ENCODE measurements at regions of chr1 and their contacts with region 1.

Region 1: DNA sequence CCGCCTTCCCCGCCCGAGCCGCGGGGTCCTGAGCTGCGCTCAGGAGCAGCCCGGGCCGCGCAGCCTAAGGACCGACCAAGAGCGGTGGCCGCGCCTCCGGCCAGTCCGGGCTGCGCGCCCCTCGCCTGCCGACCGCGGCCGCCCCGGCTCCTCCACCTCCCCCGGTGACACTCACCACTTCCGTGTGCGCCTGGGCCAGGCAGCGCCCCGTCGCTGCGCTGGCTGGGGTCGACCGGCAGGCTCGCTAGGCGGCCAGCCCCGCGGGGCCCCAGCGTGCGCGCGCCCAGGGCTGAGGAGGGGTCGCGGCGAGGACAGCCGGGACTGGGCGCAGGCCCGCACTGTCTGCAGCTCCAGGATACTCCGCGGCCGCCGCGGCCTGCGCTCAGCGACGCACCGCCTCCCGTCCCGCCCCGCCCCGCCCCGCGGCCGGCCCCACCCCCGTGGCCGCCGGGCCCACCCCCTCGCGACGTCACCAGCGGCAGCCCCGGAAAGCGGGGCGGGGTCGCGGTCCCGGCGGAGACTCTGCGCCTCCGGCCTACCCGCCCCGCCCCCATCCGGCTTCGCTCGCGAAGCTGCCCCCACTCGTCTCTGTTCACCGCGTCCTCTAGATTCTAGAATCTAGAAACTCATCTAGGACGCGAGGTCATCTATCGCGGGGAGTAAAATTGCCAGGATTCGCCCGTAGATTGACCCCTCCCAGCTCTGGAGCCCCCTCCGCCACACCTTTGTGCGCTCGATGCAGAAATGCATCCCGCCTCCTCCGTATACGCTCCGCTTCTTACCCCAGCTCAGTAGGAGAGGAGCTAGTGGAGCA is at the start of gene JAK1:
- DNase-seq: peak; percentile 87 to 91 (median 90)
- H3K4me3 ChIP-seq: peak within 1 kb of the TSS; percentile 93 to 95
- H3K4me3 Mint-ChIP-seq: peak within 1 kb of the TSS; percentile 89 to 97 (median 94)
- H3K27ac ChIP-seq: peak within 1 kb of the TSS; percentile 96
- H3K27ac Mint-ChIP-seq: peak within 1 kb of the TSS; percentile 93 to 97 (median 97)
- H3K4me1 ChIP-seq: peaks cover 47% of the 10 kb centered on the region
- H3K4me1 Mint-ChIP-seq: peaks cover 38 to 42% (median 40%) of the 10 kb centered on the region in 4 donors
- H3K27me3 ChIP-seq: no peaks in the 10 kb centered on the region
- H3K27me3 Mint-ChIP-seq: no peaks in the 10 kb centered on the region
- total RNA-seq, gene JAK1: 370 to 372 TPM

Region 2: DNA sequence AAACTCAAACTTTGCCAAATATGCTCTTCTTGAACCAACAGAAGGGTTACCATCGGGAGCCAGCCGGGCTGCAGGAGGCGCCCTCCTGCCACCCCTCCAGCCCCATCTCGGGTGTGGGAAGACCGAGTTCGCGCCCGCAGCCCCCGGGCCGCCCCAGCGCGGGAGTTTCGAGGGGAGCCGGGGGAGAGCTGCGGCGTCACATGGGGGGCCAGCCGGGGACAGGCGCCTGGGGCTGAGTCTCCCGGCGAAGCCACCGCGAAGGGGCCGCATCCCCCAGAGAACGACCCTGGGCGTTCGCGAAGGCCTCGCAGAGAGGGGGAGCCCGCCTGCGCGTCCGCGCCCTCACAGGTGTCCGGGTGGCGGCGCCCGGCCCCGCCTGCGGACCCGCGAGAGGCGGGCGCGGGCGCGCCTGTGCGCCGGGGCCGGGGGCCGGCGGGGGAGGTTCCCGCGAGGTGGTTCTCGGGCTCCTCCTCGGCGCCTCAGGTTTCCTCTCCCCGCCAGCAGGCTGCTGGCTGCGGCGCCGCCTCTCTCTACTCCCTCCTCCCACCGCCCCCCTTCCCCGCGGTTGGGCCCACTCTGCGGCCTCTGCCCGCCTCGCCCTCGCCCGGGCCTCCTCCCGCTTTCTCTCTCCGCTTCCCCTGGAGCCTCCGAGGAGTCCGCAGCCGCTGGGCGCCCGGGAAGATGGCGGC is 221.7 kb before region 1 on chr1 and contains the start of gene RAVER2:
- CTCF ChIA-PET with region 1: no interaction called
- POLR2A ChIA-PET with region 1: no interaction called
- intact Hi-C with region 1: loop called (anchors 10 kb)
- DNase-seq: peak; percentile 53 to 75 (median 62)
- H3K4me3 ChIP-seq: peak within 1 kb of the TSS; percentile 17 to 54
- H3K4me3 Mint-ChIP-seq: peak within 1 kb of the TSS; percentile 87 to 94 (median 92)
- H3K27ac ChIP-seq: peak within 1 kb of the TSS; percentile 43
- H3K27ac Mint-ChIP-seq: peak within 1 kb of the TSS; percentile 77 to 90 (median 82)
- H3K4me1 ChIP-seq: peaks cover 13% of the 10 kb centered on the region
- H3K4me1 Mint-ChIP-seq: peaks cover 9 to 30% (median 22%) of the 10 kb centered on the region in 4 donors
- H3K27me3 ChIP-seq: peaks cover 3% of the 10 kb centered on the region
- H3K27me3 Mint-ChIP-seq: peaks cover 2 to 3% of the 10 kb centered on the region in 2 donors
- total RNA-seq, gene RAVER2: 1.7 to 2.1 TPM

Region 3: GRCh38 chr1:64864018-64864940 is 102.1 kb before region 1 on chr1:
- CTCF ChIA-PET with region 1: interaction called, 3 read pairs
- POLR2A ChIA-PET with region 1: interaction called, 20 read pairs
- intact Hi-C with region 1: loop called (anchors 1 kb)
- DNase-seq: peak; percentile 71 to 77 (median 73)
- H3K4me3 ChIP-seq: no peak overlapping the region
- H3K4me3 Mint-ChIP-seq: peak overlapping the region in 7 of 8 donors; percentile 7 to 79 (median 64)
- H3K27ac ChIP-seq: peak overlapping the region; percentile 48
- H3K27ac Mint-ChIP-seq: peak overlapping the region; percentile 63 to 93 (median 89)
- H3K4me1 ChIP-seq: peaks cover 29% of the 10 kb centered on the region
- H3K4me1 Mint-ChIP-seq: peaks cover 30 to 58% (median 46%) of the 10 kb centered on the region in 4 donors
- H3K27me3 ChIP-seq: no peaks in the 10 kb centered on the region
- H3K27me3 Mint-ChIP-seq: no peaks in the 10 kb centered on the region

Region 4: GRCh38 chr1:64923294-64923721 is 43.1 kb before region 1 on chr1:
- CTCF ChIA-PET with region 1: interaction called, 3 read pairs
- POLR2A ChIA-PET with region 1: interaction called, 17 read pairs
- intact Hi-C with region 1: loop called (anchors 2 kb)
- DNase-seq: peak in 2 of 5 donors; percentile 53 to 67
- H3K4me3 ChIP-seq: no peak overlapping the region
- H3K4me3 Mint-ChIP-seq: peak overlapping the region in 7 of 8 donors; percentile 5 to 71 (median 60)
- H3K27ac ChIP-seq: peak overlapping the region; percentile 33
- H3K27ac Mint-ChIP-seq: peak overlapping the region; percentile 2 to 89 (median 78)
- H3K4me1 ChIP-seq: peaks cover 85% of the 10 kb centered on the region
- H3K4me1 Mint-ChIP-seq: peaks cover 76 to 98% (median 88%) of the 10 kb centered on the region in 4 donors
- H3K27me3 ChIP-seq: no peaks in the 10 kb centered on the region
- H3K27me3 Mint-ChIP-seq: no peaks in the 10 kb centered on the region

Region 5: DNA sequence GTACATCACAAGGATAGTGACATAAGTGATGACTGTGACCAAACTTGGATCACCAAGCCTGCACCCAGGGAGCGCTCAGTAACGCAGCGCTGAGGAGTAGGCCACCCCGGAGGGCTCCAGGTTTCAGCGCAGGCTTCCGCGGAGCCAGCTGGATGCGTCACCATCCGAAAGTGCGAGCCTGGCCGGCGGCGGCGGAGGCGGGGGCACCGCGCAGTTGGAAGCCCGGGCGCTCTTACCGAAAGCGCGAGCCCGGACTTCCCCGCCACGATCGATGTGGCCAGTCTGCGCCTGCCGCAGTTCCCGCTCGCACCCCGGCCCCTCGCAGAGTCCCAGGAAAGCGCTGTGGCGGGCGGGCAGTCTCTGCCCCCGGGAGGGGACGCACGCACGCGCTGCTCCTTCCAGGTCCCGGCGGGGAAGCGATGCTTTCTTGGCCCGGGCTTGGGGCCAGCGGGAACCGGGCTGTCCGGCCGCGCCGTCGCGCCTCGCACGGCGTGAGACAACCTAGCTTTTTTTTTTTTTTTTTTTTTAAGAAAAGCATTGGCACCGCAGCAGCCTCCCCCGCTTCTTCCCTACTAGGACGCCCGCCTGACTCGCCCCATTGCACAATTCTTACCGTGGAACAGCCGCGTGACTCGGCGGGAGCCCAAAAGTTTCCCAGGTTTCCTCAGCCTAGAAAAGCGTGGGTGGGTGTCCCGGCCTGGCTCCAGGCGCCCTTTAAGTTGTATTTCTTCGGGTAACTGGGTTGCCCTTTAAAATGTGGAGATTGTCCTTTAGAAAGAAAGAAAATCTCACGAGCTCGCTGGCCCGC is 36.3 kb after region 1 on chr1:
- CTCF ChIA-PET with region 1: interaction called, 3 read pairs
- POLR2A ChIA-PET with region 1: interaction called, 36 read pairs
- intact Hi-C with region 1: loop called (anchors 1 kb)
- DNase-seq: peak; percentile 67 to 87 (median 72)
- H3K4me3 ChIP-seq: peak overlapping the region; percentile 33 to 49
- H3K4me3 Mint-ChIP-seq: peak overlapping the region; percentile 77 to 90 (median 89)
- H3K27ac ChIP-seq: peak overlapping the region; percentile 52
- H3K27ac Mint-ChIP-seq: peak overlapping the region; percentile 57 to 96 (median 89)
- H3K4me1 ChIP-seq: peaks cover 25% of the 10 kb centered on the region
- H3K4me1 Mint-ChIP-seq: peaks cover 21 to 43% (median 30%) of the 10 kb centered on the region in 4 donors
- H3K27me3 ChIP-seq: no peaks in the 10 kb centered on the region
- H3K27me3 Mint-ChIP-seq: no peaks in the 10 kb centered on the region

Region 6: DNA sequence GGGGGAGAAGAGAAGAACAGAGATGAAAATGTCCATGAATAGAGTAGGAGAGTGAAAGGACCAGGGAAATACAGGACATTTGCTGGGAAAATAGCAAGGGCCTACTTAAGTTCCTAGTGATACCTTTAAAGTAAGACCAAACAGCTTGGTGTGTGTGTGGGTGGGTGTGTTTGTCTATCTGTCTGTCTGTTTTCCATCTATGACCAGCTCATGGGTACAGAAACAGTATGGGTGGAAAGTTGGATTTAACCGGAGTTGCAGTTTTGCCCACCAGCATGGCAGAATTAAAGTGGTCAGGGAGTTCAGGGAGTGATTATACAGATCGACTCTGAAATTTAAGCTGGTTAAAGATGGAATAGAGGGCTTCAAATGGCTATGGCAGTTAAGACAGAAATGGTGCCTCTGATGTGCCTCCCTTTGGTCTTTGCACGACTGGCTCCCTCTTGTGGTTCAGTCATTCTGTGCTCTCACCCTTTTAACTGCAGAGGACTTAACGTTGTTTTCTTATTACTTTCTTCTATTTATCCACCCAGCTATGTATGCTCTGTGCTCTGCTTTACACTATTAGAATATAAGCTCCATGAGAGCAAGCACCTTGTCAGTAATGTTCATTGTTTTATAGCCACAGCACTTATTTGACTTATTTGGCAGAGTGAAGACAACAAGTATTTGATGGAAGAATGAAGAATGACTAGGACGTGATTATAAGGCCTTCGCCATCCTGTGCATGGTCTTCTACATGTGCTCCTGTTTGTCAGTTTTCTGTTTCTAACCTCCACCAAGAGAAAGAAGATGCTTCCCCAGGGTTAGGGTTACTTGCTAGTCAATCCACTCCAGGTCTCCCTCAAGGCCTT is 109.0 kb after region 1 on chr1:
- CTCF ChIA-PET with region 1: interaction called, 12 read pairs
- POLR2A ChIA-PET with region 1: interaction called, 42 read pairs
- intact Hi-C with region 1: no loop called
- DNase-seq: peak; percentile 71 to 77 (median 73)
- H3K4me3 ChIP-seq: no peak overlapping the region
- H3K4me3 Mint-ChIP-seq: no peak overlapping the region
- H3K27ac ChIP-seq: no peak overlapping the region
- H3K27ac Mint-ChIP-seq: peak overlapping the region in 2 of 7 donors; percentile 14 to 16
- H3K4me1 ChIP-seq: peaks cover 2% of the 10 kb centered on the region
- H3K4me1 Mint-ChIP-seq: peaks cover 10 to 27% (median 12%) of the 10 kb centered on the region in 4 donors
- H3K27me3 ChIP-seq: no peaks in the 10 kb centered on the region
- H3K27me3 Mint-ChIP-seq: peaks cover 3 to 6% of the 10 kb centered on the region in 2 donors